ENCODE measurements at regions of chr20 and their contacts with region 1.

Region 1: DNA sequence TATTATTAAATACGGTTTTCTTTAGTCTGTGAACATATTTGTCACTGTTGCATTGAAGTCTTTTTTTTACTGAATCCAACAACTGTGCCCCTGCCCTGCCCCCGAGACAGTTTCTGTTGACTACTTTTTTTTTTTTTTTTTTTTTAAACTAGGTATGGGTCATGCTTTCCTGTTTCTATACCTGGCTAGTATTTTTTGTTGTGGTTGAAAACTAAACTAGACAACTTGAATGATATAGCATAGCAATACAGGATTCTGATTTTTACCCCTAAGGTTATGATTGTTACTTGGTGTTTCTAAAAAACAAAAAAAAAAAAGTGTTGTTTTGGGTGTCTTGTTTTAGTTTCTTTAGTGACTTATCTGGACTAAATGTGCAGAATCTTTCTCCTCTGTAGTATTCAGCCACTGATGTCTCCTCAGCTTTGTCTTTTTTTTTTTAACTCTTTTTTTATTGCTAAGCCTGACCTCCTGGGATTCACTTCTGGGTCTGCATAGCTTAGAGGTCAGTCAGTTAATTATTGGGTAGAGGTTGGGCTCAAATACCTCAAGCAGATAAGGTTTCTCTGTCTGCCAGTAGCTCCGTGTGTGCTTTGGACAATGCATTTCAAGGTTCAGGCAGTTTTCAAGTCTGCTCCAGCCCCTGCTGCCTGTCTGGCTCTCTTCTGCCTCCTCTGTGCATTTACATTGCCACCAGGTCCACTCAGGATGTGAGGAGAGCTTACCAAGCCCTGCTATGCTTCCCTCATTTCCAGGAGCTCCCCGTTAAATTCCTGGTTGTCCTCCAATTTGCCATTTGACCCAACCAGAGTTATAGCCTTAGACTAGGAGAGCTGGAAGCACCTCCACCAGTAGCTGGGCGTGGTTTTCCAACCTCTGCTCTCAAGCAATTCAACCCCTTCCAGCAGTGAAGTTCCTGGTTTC is 91.4 kb downstream of the SYNDIG1 start:
- DNase-seq: no peak
- ATAC-seq: no peak
- H3K4me3 ChIP-seq: no peak overlapping the region
- H3K27ac ChIP-seq: no peak overlapping the region
- H3K4me1 ChIP-seq: no peaks in the 10 kb centered on the region
- H3K27me3 ChIP-seq: no peaks in the 10 kb centered on the region
- CTCF ChIP-seq: no peak
- POLR2A ChIP-seq: no peak

Region 2: DNA sequence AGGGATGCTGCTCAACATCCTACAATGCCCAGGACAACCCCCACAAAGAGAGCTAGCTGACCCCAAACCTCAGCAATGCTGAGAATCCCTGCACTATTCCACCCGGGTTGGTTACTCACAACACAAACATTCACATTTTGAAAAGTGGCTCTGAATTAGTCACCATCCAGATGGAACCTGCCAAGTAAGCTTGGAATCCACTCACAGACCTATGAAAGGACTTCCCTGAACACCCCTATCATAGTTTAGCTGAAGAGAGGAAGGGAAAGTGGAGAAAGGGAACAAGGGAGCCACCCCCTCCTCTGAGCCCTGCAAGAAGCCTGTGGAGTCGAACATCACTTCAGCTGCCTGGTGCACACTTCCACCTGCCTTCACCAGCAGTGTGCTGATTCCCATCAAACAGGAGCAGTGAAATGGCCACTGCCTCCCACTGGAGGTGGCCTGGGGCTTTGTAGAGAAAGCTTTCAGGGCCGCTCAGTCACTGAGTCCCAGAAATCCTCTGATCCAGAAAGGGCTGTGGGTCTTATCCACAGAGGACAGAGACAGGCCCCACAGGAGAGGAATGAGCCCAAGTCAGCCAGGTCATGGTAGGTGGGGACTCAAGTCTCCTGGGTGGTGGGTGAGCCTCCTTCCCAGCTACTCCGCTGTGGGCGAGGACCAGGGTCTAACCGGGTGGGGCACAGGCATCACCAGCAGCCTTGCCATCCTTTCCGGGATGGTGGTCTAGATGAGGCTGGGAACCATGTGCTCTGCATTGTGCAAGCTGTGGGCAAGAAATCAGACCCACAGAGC is 112.3 kb after region 1 on chr20:
- in situ Hi-C with region 1: loop called in 1 of 4 experiments (anchors 25 kb)
- intact Hi-C with region 1: no loop called
- DNase-seq: no peak
- ATAC-seq: no peak
- H3K4me3 ChIP-seq: no peak overlapping the region
- H3K27ac ChIP-seq: no peak overlapping the region
- H3K4me1 ChIP-seq: no peaks in the 10 kb centered on the region
- H3K27me3 ChIP-seq: no peaks in the 10 kb centered on the region
- CTCF ChIP-seq: no peak
- POLR2A ChIP-seq: no peak